ENCODE measurements at regions of chr6 and their contacts with region 1.

Region 1: DNA sequence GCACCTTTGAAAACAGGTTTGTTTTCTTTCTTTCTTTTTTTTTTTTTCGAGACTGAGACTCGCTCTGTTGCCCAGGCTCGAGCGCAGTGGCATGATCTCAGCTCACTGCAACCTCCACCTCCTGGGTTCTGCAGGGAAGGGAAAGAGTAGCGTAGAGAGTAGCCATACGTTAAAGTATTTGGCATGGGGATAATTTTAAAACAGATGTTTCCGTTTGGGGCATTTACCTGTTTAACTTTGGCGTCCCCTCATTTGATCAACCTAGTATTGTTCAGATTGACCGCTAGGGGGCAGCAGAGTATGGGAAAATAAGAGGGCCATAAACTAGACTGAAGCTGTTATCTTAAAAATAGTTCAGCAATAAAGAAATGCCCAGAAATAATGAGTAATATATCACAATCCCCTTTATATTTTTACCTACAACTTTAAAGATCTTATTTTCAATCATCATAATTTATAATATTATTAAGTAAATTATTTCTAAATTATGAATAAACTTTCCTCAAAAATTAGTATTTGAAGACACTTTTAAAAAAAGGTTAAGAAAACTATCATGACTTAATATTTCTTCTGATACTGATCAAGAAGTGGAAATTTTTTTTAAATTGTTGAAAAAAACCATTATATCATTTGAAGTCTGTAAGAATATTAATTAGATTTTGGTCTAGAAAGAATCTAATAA is 7.6 kb upstream of the TAAR9 start:
- DNase-seq: peak; percentile 26 to 70 (median 54)
- ATAC-seq: peak; percentile 85
- H3K4me3 ChIP-seq: no peak overlapping the region
- H3K4me3 Mint-ChIP-seq: peak overlapping the region in 3 of 10 donors; percentile 5 to 66 (median 32)
- H3K27ac ChIP-seq: no peak overlapping the region
- H3K27ac Mint-ChIP-seq: no peak overlapping the region
- H3K4me1 ChIP-seq: no peaks in the 10 kb centered on the region
- H3K4me1 Mint-ChIP-seq: peaks cover 0 to 3% (median 0%) of the 10 kb centered on the region in 7 donors
- H3K27me3 ChIP-seq: no peaks in the 10 kb centered on the region
- H3K27me3 Mint-ChIP-seq: peaks cover 6 to 29% (median 18%) of the 10 kb centered on the region in 5 donors

Region 2: GRCh38 chr6:131292145-131292938 is 1238.1 kb before region 1 on chr6:
- CTCF ChIA-PET with region 1: no interaction called
- POLR2A ChIA-PET with region 1: no interaction called
- intact Hi-C with region 1: no loop called
- DNase-seq: peak in 2 of 9 donors; percentile 10 to 12
- ATAC-seq: no peak
- H3K4me3 ChIP-seq: no peak overlapping the region
- H3K4me3 Mint-ChIP-seq: peak overlapping the region in 8 of 10 donors; percentile 27 to 82 (median 45)
- H3K27ac ChIP-seq: peak overlapping the region; percentile 16
- H3K27ac Mint-ChIP-seq: peak overlapping the region; percentile 29 to 92 (median 85)
- H3K4me1 ChIP-seq: peaks cover 0 to 14% of the 10 kb centered on the region in 2 donors
- H3K4me1 Mint-ChIP-seq: peaks cover 12 to 50% (median 32%) of the 10 kb centered on the region in 7 donors
- H3K27me3 ChIP-seq: no peaks in the 10 kb centered on the region
- H3K27me3 Mint-ChIP-seq: no peaks in the 10 kb centered on the region

Region 3: DNA sequence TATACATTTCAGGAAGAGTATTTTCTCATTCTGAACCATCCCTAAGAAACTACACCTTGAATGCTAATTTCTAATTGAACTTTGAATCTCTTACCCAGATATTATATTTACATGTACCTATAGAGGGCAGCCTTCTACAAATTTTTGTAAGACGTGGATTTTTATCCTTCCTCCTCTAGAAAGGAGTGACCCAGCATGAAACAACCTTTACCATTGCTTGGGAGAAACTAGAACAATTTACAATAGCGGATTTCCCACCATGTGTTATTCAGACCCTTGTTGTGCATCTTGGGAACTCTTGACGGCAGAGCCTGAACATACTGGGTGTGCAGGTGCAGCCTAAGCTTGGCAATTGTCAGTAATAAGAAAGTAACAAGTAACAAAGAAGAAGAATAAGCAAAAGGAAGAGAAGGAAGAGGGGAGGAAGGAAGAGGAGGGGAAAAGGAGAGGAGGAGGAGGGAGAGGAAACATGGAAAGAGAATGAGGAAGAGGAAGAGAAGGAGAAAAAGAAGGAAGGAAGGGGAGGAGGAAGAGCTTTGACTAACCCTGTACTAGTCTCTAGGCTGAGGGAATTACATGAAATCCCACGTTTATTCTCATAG is 139.4 kb after region 1 on chr6:
- CTCF ChIA-PET with region 1: no interaction called
- POLR2A ChIA-PET with region 1: no interaction called
- intact Hi-C with region 1: loop called (anchors 1 to 5 kb)
- DNase-seq: peak in 6 of 9 donors; percentile 4 to 41 (median 32)
- ATAC-seq: peak; percentile 79
- H3K4me3 ChIP-seq: no peak overlapping the region
- H3K4me3 Mint-ChIP-seq: no peak overlapping the region
- H3K27ac ChIP-seq: no peak overlapping the region
- H3K27ac Mint-ChIP-seq: no peak overlapping the region
- H3K4me1 ChIP-seq: no peaks in the 10 kb centered on the region
- H3K4me1 Mint-ChIP-seq: peaks cover 0 to 6% (median 4%) of the 10 kb centered on the region in 7 donors
- H3K27me3 ChIP-seq: no peaks in the 10 kb centered on the region
- H3K27me3 Mint-ChIP-seq: peaks cover 3 to 17% (median 9%) of the 10 kb centered on the region in 5 donors

Region 4: GRCh38 chr6:132780770-132781371 is 250.4 kb after region 1 on chr6:
- CTCF ChIA-PET with region 1: interaction called, 3 read pairs
- POLR2A ChIA-PET with region 1: no interaction called
- intact Hi-C with region 1: loop called (anchors 1 to 5 kb)
- DNase-seq: no peak
- ATAC-seq: no peak
- H3K4me3 ChIP-seq: no peak overlapping the region
- H3K4me3 Mint-ChIP-seq: no peak overlapping the region
- H3K27ac ChIP-seq: no peak overlapping the region
- H3K27ac Mint-ChIP-seq: no peak overlapping the region
- H3K4me1 ChIP-seq: no peaks in the 10 kb centered on the region
- H3K4me1 Mint-ChIP-seq: no peaks in the 10 kb centered on the region
- H3K27me3 ChIP-seq: no peaks in the 10 kb centered on the region
- H3K27me3 Mint-ChIP-seq: no peaks in the 10 kb centered on the region

Region 5: GRCh38 chr6:132813173-132813856 is 282.9 kb after region 1 on chr6:
- CTCF ChIA-PET with region 1: no interaction called
- POLR2A ChIA-PET with region 1: interaction called, 3 read pairs
- intact Hi-C with region 1: loop called in 1 of 2 experiments (anchors 2 kb)
- DNase-seq: peak in 8 of 9 donors; percentile 31 to 71 (median 62)
- ATAC-seq: no peak
- H3K4me3 ChIP-seq: peak overlapping the region; percentile 90
- H3K4me3 Mint-ChIP-seq: peak overlapping the region; percentile 91 to 100 (median 98)
- H3K27ac ChIP-seq: peak overlapping the region; percentile 80
- H3K27ac Mint-ChIP-seq: peak overlapping the region; percentile 95 to 100 (median 98)
- H3K4me1 ChIP-seq: peaks cover 23 to 26% of the 10 kb centered on the region in 2 donors
- H3K4me1 Mint-ChIP-seq: peaks cover 29 to 54% (median 43%) of the 10 kb centered on the region in 7 donors
- H3K27me3 ChIP-seq: no peaks in the 10 kb centered on the region
- H3K27me3 Mint-ChIP-seq: peaks cover 0 to 30% (median 0%) of the 10 kb centered on the region in 5 donors

Region 6: GRCh38 chr6:132962936-132963868 is 432.8 kb after region 1 on chr6:
- CTCF ChIA-PET with region 1: no interaction called
- POLR2A ChIA-PET with region 1: no interaction called
- intact Hi-C with region 1: loop called (anchors 1 to 5 kb)
- DNase-seq: peak in 7 of 9 donors; percentile 6 to 64 (median 20)
- ATAC-seq: peak; percentile 65
- H3K4me3 ChIP-seq: no peak overlapping the region
- H3K4me3 Mint-ChIP-seq: no peak overlapping the region
- H3K27ac ChIP-seq: no peak overlapping the region
- H3K27ac Mint-ChIP-seq: no peak overlapping the region
- H3K4me1 ChIP-seq: no peaks in the 10 kb centered on the region
- H3K4me1 Mint-ChIP-seq: peaks cover 0 to 29% (median 0%) of the 10 kb centered on the region in 7 donors
- H3K27me3 ChIP-seq: no peaks in the 10 kb centered on the region
- H3K27me3 Mint-ChIP-seq: peaks cover 20 to 49% (median 36%) of the 10 kb centered on the region in 5 donors

Region 7: DNA sequence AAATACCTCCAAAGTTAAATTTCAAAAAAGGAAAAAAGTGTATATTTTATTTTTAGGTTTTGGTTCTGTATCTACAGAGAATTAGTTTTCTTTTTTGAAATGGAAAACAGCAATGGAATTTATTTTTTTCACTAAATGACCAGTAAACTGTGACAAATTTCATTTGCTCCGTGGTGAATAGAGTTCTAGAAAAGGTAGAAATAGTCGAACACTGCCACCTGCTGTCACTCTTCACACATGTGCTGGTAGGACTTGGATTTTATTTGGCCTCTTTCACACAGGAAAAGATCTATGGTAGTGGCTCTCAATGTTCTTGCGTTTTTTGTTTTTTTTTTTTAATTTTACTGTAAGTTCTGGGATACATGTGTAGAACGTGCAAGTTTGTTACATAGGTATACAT is 1023.2 kb after region 1 on chr6:
- CTCF ChIA-PET with region 1: no interaction called
- POLR2A ChIA-PET with region 1: no interaction called
- intact Hi-C with region 1: loop called in 1 of 2 experiments (anchors 1 kb)
- DNase-seq: peak in 5 of 9 donors; percentile 7 to 23 (median 14)
- ATAC-seq: no peak
- H3K4me3 ChIP-seq: no peak overlapping the region
- H3K4me3 Mint-ChIP-seq: no peak overlapping the region
- H3K27ac ChIP-seq: no peak overlapping the region
- H3K27ac Mint-ChIP-seq: no peak overlapping the region
- H3K4me1 ChIP-seq: no peaks in the 10 kb centered on the region
- H3K4me1 Mint-ChIP-seq: no peaks in the 10 kb centered on the region
- H3K27me3 ChIP-seq: no peaks in the 10 kb centered on the region
- H3K27me3 Mint-ChIP-seq: peaks cover 0 to 6% (median 0%) of the 10 kb centered on the region in 5 donors

Region 8: GRCh38 chr6:133923938-133924593 is 1393.6 kb after region 1 on chr6:
- CTCF ChIA-PET with region 1: no interaction called
- POLR2A ChIA-PET with region 1: no interaction called
- intact Hi-C with region 1: loop called in 1 of 2 experiments (anchors 1 kb)
- DNase-seq: peak in 7 of 9 donors; percentile 26 to 64 (median 57)
- ATAC-seq: peak; percentile 89
- H3K4me3 ChIP-seq: no peak overlapping the region
- H3K4me3 Mint-ChIP-seq: no peak overlapping the region
- H3K27ac ChIP-seq: no peak overlapping the region
- H3K27ac Mint-ChIP-seq: no peak overlapping the region
- H3K4me1 ChIP-seq: no peaks in the 10 kb centered on the region
- H3K4me1 Mint-ChIP-seq: no peaks in the 10 kb centered on the region
- H3K27me3 ChIP-seq: no peaks in the 10 kb centered on the region
- H3K27me3 Mint-ChIP-seq: peaks cover 26 to 41% (median 38%) of the 10 kb centered on the region in 5 donors